Posterior vena cava (tissue), 2 donors: ENCODE measurements at regions of chr1 and their contacts with region 1.

Region 1: GRCh38 chr1:21189906-21190500 is 13.3 kb upstream of the EIF4G3 start:
- DNase-seq: no peak

Region 2: GRCh38 chr1:20786253-20787028 is 403.6 kb before region 1 on chr1:
- intact Hi-C with region 1: loop called in 1 of 2 experiments (anchors 5 kb)
- DNase-seq: peak; percentile 98

Region 3: DNA sequence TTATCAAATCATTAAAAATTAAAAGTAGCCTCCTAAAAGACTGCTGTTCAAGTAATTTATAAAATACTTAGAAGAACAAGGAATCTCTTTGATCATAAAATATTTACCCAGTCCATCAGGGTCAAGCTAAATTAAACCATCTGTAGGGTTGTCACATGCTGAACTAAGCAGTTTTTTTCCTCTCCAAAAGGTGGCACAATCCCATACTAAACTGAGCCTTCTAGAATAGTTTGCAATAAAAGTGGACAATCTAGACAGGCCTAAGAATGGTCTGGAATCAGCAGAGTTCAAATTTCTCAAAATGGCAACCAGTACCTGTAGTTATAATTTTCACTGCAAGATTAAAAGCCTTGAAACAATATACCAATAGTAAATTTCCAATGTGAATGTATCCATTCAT is 208.1 kb before region 1 on chr1:
- intact Hi-C with region 1: loop called (anchors 10 kb)
- DNase-seq: no peak

Region 4: GRCh38 chr1:21232044-21232443 is 42.0 kb after region 1 on chr1:
- intact Hi-C with region 1: no loop called
- DNase-seq: no peak

Region 5: GRCh38 chr1:21497466-21498061 is 307.6 kb after region 1 on chr1:
- intact Hi-C with region 1: no loop called
- DNase-seq: no peak